ENCODE measurements at regions of chr12 and their contacts with region 1.

Region 1: DNA sequence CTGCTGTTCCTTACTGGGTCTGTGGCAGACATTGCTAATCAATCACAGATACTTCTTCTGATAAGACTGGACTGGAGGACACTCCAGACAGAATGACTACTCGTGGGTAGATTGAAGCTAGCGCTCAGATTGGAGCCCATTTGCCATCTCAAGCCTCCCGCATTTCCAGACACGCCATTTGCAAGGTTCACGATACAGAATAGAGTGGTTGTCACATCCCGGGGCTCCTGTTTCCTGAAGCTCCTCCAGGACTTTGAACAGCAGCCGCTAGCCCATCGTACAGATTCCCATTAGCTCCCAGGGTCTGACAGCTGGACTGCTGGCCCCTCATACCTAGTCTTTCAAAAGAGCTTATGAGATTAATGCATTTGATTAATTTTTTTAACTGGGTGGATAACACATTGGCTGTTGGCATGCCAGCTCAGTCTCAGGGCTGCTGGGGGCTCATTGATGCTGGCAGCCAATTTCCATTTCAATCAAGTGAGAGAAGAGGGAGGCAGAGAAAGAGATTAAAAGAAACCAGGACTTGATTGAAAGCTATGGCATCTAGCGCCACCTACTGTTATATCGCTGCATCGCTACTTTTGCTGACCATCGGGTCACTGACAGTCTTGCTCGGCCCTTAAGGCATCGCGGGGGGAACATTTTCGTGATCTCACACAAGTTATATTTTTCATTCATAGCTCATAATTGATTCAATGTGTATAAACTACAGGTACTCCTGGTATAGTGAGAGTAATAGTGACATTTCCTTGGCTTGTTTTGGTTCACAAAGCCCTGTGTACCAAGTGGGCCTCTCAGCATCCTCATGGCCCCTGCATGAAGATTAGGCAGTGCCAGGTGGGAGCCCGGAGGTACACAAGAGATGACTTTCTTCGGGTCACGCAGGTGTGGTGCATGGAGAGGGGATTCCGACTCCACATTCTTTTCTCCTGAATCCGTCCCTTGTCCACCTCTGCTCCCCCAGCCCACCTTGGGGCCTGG is 78.6 kb downstream of the CCDC60 start:
- DNase-seq: peak in 5 of 6 donors; percentile 20 to 75 (median 57)
- ATAC-seq: peak in 3 of 4 donors; percentile 50 to 65 (median 60)
- H3K4me3 ChIP-seq: no peak overlapping the region
- H3K27ac ChIP-seq: no peak overlapping the region
- H3K4me1 ChIP-seq: no peaks in the 10 kb centered on the region
- H3K27me3 ChIP-seq: no peaks in the 10 kb centered on the region
- CTCF ChIP-seq: peak; percentile 58 to 82 (median 70)

Region 2: DNA sequence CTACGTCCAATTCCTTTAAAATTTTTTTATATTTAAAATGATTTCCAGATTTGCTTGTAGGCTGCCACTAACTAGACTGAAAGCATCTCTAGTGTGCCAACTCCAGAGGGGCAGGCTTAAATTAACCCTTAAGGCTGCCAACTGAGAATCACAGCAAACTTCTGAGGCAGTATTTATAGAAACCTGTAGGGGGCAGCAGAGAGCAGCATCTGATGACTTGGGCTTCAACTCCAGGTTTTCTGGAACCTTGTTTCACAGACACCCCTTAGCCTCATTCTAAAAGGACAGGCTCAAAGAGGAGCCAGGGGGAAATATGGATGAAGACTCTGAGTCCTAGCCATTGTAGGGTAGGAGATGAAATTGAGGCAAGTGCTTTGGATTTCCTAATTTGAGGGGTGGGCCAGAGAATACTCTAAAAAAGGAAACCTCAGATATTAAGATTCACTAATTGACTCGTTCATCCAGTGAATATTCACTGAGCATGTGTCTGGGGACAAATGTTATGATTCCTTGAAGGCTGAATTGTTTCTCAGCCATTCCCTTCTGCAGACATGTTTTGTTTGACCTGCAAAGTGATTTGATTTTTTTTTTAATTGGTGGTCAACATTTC is 297.7 kb before region 1 on chr12:
- intact Hi-C with region 1: loop called in 2 of 3 experiments (anchors 5 to 10 kb)
- DNase-seq: peak in 2 of 6 donors; percentile 19 to 39
- ATAC-seq: peak in 3 of 4 donors; percentile 44 to 60 (median 54)
- H3K4me3 ChIP-seq: no peak overlapping the region
- H3K27ac ChIP-seq: no peak overlapping the region
- H3K4me1 ChIP-seq: peaks cover 0 to 2% (median 0%) of the 10 kb centered on the region in 3 donors
- H3K27me3 ChIP-seq: no peaks in the 10 kb centered on the region
- CTCF ChIP-seq: peak; percentile 77 to 88 (median 84)

Region 3: GRCh38 chr12:119375075-119375882 is 37.8 kb before region 1 on chr12:
- intact Hi-C with region 1: no loop called
- DNase-seq: no peak
- ATAC-seq: peak in 1 of 4 donors; percentile 44
- H3K4me3 ChIP-seq: no peak overlapping the region
- H3K27ac ChIP-seq: no peak overlapping the region
- H3K4me1 ChIP-seq: no peaks in the 10 kb centered on the region
- H3K27me3 ChIP-seq: no peaks in the 10 kb centered on the region
- CTCF ChIP-seq: no peak

Measured in pancreas (tissue), 10 donors.